ENCODE measurements at regions of chr21 and their contacts with region 1.

Region 1: GRCh38 chr21:31198575-31198974 is 145.5 kb downstream of the TIAM1 start:
- DNase-seq: no peak
- ATAC-seq: peak; percentile 73 to 84 (median 81)
- H3K4me3 ChIP-seq: no peak overlapping the region
- H3K27ac ChIP-seq: no peak overlapping the region
- H3K4me1 ChIP-seq: no peaks in the 10 kb centered on the region
- H3K27me3 ChIP-seq: no peaks in the 10 kb centered on the region
- CTCF ChIP-seq: peak; percentile 68 to 75 (median 71)
- POLR2A ChIP-seq: no peak

Region 2: GRCh38 chr21:31136891-31137290 is 61.7 kb before region 1 on chr21:
- intact Hi-C with region 1: no loop called
- DNase-seq: peak in 1 of 3 donors; percentile 46
- ATAC-seq: peak in 2 of 4 donors; percentile 51 to 61
- H3K4me3 ChIP-seq: no peak overlapping the region
- H3K27ac ChIP-seq: no peak overlapping the region
- H3K4me1 ChIP-seq: no peaks in the 10 kb centered on the region
- H3K27me3 ChIP-seq: no peaks in the 10 kb centered on the region
- CTCF ChIP-seq: no peak
- POLR2A ChIP-seq: no peak

Region 3: GRCh38 chr21:31580866-31581276 is 382.3 kb after region 1 on chr21:
- intact Hi-C with region 1: loop called in 1 of 2 experiments (anchors 10 kb)
- DNase-seq: peak; percentile 60 to 62 (median 61)
- ATAC-seq: peak; percentile 93 to 96 (median 95)
- H3K4me3 ChIP-seq: no peak overlapping the region
- H3K27ac ChIP-seq: no peak overlapping the region
- H3K4me1 ChIP-seq: no peaks in the 10 kb centered on the region
- H3K27me3 ChIP-seq: no peaks in the 10 kb centered on the region
- CTCF ChIP-seq: peak; percentile 75 to 80 (median 78)
- POLR2A ChIP-seq: no peak

Region 4: GRCh38 chr21:31592963-31593560 is 394.5 kb after region 1 on chr21:
- intact Hi-C with region 1: loop called (anchors 10 kb)
- DNase-seq: no peak
- ATAC-seq: peak in 1 of 4 donors; percentile 14
- H3K4me3 ChIP-seq: no peak overlapping the region
- H3K27ac ChIP-seq: no peak overlapping the region
- H3K4me1 ChIP-seq: peaks cover 0 to 6% (median 0%) of the 10 kb centered on the region in 4 donors
- H3K27me3 ChIP-seq: no peaks in the 10 kb centered on the region
- CTCF ChIP-seq: no peak
- POLR2A ChIP-seq: no peak